RWPE1 (cell line): ENCODE measurements at regions of chr2 and their contacts with region 1.

Region 1: DNA sequence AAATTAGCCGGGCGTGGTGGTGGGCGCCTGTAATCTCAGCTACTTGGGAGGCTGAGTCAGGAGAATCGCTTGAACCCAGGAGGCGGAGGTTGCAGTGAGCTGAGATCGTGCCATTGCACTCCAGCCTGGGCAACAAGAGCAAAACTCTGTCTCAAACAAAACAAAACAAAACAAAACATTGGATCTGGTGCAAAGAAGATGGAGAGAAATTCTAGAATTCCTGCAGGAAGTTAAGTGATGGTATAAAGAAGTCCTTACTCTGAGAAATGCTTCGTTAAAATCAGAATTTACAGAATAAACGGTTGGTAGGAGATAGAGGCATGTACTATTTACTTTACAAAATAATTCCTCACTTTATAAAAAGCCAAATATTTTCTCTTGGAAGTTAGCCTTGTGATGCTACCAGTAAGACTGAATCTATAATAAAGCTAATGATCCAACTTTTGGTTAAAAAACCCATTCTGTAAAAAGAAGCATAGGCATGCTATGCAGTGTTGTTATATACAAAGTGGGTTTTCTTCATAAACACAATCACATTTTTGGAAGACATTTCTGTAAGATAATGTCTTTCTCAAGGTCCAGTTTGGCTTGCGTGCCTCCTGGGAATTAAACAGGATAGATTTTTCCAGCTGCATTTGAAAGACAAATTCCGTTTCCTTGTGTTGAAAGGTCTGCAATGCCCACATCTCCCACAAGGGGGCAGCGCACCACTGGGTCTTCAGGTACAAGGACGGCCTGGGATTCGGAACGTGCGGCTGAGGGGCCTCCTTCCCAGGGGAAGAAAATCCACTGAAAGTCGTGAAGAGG is 35.6 kb upstream of the PNO1 start:
- DNase-seq: peak; percentile 74
- H3K27ac ChIP-seq: no peak overlapping the region
- CTCF ChIP-seq: peak; percentile 94

Region 2: GRCh38 chr2:68203587-68203986 is 81.5 kb after region 1 on chr2:
- CTCF ChIA-PET with region 1: no interaction called
- POLR2A ChIA-PET with region 1: no interaction called
- DNase-seq: no peak
- H3K27ac ChIP-seq: no peak overlapping the region
- CTCF ChIP-seq: no peak

Region 3: DNA sequence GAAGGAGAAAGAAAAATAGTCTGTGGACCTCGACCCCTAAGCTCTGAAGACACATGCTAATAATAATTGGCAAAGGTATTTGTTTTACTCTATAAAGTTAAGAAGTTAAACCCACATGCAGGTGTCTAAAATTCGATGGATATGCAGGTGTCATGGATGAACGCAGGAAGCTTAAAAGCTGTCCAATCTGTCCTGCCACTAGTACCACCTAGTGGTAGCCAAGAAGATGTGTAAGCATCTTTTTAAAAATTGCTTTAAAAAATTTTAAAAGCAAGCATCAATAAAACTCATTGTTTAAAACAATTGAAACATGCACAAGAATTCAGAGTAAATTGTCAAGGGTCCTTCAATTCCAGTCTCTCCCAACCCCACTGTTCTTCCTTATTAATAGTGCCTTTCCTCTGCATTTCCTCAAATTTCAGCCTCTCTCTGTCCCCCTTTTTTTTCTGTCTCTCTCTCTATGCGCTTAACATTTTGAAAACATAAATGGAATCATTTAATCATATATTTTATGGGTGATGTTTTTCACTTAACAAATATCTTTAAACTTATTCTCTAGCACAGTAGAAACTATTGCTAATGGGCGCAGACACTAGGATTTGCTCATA is 160.8 kb after region 1 on chr2:
- CTCF ChIA-PET with region 1: interaction called, 20 read pairs
- POLR2A ChIA-PET with region 1: no interaction called
- DNase-seq: peak; percentile 53
- H3K27ac ChIP-seq: no peak overlapping the region
- CTCF ChIP-seq: peak; percentile 83

Region 4: DNA sequence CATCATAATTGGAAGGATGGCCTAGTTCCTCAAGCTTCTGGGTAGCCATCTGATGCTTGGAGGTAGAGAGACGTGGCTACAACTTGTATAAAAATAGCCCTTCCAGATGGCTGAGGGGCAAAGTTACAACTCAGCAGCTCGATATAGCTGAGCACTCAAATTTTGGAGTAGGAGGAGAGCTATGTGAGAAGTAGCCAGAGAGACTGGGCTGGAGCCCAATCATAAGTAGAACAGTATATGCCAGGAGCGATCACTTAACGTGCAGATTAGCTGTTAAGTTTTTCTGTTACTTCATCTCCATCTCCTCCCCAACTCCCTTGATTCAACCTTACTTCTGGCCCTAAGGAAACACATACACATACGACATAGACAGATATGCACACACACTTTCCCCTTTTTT is 168.8 kb after region 1 on chr2:
- CTCF ChIA-PET with region 1: interaction called, 21 read pairs
- POLR2A ChIA-PET with region 1: interaction called, 6 read pairs
- DNase-seq: no peak
- H3K27ac ChIP-seq: no peak overlapping the region
- CTCF ChIP-seq: no peak